MCF 10A (cell line): ENCODE measurements at regions of chr3 and their contacts with region 1.

Region 1: GRCh38 chr3:58414538-58415197 is 19.0 kb downstream of the PDHB start:
- DNase-seq: peak; percentile 74
- H3K4me3 Mint-ChIP-seq: no peak overlapping the region
- H3K27ac Mint-ChIP-seq: no peak overlapping the region
- H3K4me1 Mint-ChIP-seq: peaks cover 5% of the 10 kb centered on the region
- H3K27me3 Mint-ChIP-seq: no peaks in the 10 kb centered on the region
- CTCF ChIP-seq: peak; percentile 66

Region 2: DNA sequence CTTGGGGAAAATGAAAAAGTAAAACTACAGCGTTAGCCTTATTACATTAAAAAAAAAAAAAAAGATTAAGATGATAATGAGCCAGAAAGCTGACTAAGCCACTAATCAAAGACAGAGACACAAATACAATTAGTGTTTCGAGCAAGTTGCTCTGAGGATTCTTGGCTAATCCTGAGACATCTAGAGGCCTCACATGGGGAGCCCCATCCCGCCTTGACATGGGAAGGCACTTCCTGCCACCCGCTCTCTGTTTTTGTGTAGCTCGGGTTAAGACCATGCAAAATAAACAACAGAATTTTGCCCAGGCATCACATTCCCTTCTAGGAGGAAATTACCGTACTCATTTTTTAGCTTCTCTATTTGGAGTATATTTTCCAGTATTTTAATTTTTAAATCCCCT is 1230.1 kb before region 1 on chr3:
- CTCF ChIA-PET with region 1: no interaction called
- POLR2A ChIA-PET with region 1: no interaction called
- intact Hi-C with region 1: no loop called
- DNase-seq: no peak
- H3K4me3 Mint-ChIP-seq: no peak overlapping the region
- H3K27ac Mint-ChIP-seq: no peak overlapping the region
- H3K4me1 Mint-ChIP-seq: no peaks in the 10 kb centered on the region
- H3K27me3 Mint-ChIP-seq: peaks cover 14% of the 10 kb centered on the region
- CTCF ChIP-seq: no peak

Region 3: GRCh38 chr3:58188173-58188564 is 226.5 kb before region 1 on chr3:
- CTCF ChIA-PET with region 1: interaction called, 3 read pairs
- POLR2A ChIA-PET with region 1: interaction called, 3 read pairs
- intact Hi-C with region 1: loop called (anchors 5 kb)
- DNase-seq: peak; percentile 86
- H3K4me3 Mint-ChIP-seq: no peak overlapping the region
- H3K27ac Mint-ChIP-seq: no peak overlapping the region
- H3K4me1 Mint-ChIP-seq: peaks cover 9% of the 10 kb centered on the region
- H3K27me3 Mint-ChIP-seq: no peaks in the 10 kb centered on the region
- CTCF ChIP-seq: no peak

Region 4: DNA sequence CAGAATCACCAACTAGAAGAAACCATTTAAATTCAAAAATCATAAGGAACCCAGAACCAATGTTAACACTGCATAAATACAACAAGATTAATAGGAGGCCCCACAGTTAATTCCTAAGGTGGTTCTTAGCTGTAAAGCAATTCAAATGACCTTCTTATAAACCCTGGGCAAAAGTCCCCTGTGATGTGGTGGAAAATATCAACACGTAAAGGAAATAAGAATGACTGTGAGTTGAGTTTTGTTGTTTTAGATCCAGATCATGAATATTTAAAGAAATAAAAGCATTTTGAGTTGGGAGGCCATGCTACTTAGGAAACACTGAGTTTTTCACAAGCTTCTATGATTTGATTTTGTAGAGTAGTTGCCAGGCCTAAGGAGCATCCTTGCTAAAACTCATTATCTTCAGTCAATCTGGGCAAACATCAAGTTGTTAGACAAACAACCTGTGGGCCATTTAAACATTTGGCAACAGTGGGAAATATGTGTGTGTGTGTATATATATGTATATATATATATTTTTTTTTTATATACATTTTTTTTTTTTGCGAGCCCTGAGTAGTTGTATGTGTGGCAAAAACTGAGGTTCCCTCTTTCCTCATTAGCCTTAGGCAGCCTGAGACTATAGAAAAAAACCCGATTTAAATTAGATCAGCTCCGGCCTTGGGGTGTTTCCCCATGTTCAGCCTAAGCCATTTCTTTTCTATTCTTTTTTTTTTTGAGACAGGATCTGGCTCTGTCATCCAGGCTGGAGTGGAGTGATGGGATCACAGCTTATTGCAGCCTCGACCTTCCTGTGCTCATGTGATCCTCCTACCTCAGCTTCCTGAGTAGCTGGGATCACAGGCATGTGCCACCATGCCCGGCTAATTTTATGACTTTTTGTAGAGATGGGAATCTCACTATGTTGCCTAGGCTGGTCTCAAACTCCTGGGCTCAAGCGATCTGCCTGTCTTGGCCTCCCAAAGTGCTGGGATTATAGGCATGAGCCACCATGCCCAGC is 90.0 kb before region 1 on chr3:
- CTCF ChIA-PET with region 1: interaction called, 30 read pairs
- POLR2A ChIA-PET with region 1: interaction called, 3 read pairs
- intact Hi-C with region 1: loop called (anchors 1 kb)
- DNase-seq: no peak
- H3K4me3 Mint-ChIP-seq: no peak overlapping the region
- H3K27ac Mint-ChIP-seq: no peak overlapping the region
- H3K4me1 Mint-ChIP-seq: no peaks in the 10 kb centered on the region
- H3K27me3 Mint-ChIP-seq: no peaks in the 10 kb centered on the region
- CTCF ChIP-seq: no peak

Region 5: DNA sequence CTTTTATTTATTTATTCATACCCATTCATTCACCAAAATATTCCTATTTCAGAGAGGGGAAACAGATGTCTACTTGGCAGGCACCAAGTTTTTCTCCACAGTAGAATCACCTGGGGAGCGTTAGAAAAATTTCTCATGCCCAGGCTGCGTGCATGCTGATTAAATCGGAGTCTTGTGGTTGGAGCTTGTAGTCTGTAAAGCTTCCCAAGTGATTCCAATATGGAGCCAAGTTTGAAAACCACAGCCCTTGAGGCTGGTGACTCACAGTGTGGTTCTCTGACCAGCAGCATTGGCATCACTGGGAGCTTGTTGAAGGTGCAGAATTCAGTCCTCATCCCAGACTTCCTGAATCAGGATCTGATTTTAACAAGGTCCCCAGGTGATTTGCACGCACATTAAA is 30.8 kb before region 1 on chr3:
- CTCF ChIA-PET with region 1: interaction called, 13 read pairs
- POLR2A ChIA-PET with region 1: no interaction called
- intact Hi-C with region 1: no loop called
- DNase-seq: peak; percentile 97
- H3K4me3 Mint-ChIP-seq: peak overlapping the region; percentile 24
- H3K27ac Mint-ChIP-seq: peak overlapping the region; percentile 77
- H3K4me1 Mint-ChIP-seq: peaks cover 25% of the 10 kb centered on the region
- H3K27me3 Mint-ChIP-seq: no peaks in the 10 kb centered on the region
- CTCF ChIP-seq: no peak

Region 6: DNA sequence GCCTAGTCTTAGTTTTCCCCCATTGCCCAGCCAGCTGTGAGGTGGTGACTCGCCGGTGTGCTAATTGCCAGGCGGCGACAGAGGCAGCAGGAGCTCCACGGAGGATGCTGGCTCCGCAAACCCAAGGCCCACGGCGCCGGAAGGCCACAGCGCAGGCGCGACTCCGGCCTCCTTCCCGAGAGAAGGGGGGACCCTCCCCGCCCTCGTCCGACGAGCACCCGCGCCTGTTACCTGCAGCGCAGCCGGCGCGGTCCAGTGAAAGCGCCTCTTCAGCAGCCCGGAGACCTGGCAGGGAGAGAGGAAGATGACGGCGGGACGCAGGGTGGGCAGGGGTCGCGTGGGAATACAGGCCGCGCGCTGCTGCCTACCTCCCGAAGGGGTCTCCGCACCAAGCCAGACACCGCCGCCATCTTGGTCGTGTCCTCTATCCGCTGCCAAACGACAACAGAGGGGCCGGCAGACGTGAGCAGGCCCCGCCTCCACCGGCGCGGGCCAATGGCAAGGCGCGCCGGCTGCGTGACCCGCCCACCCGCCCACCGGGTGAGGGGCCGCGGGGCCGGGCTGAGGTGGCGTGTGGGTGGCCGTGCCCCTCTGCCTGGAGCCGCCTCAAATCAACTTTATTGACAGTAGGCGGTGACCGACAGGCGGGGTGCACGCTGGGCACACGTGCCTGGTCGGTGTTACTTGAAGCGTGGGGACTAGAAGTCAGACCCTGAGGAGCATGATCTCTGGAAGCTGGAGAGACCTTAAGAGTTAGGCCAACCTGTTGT is 18.9 kb after region 1 on chr3 and contains the start of gene PDHB:
- CTCF ChIA-PET with region 1: interaction called, 12 read pairs
- POLR2A ChIA-PET with region 1: interaction called, 4 read pairs
- intact Hi-C with region 1: no loop called
- DNase-seq: peak; percentile 87
- H3K4me3 Mint-ChIP-seq: peak within 1 kb of the TSS; percentile 93
- H3K27ac Mint-ChIP-seq: peak within 1 kb of the TSS; percentile 40
- H3K4me1 Mint-ChIP-seq: peaks cover 21% of the 10 kb centered on the region
- H3K27me3 Mint-ChIP-seq: no peaks in the 10 kb centered on the region
- CTCF ChIP-seq: no peak
- total RNA-seq, gene PDHB: 52.2 and 62.2 TPM in 2 replicates